Activated CD4-positive, alpha-beta memory T cell treated with anti-CD3 and anti-CD28 coated beads for 36 hours (primary cell): ENCODE measurements at regions of chr13 and their contacts with region 1.

Region 1: GRCh38 chr13:39616087-39616694 is 13.2 kb upstream of the LHFPL6 start:
- DNase-seq: peak; percentile 39
- H3K4me3 Mint-ChIP-seq: no peak overlapping the region
- H3K27ac Mint-ChIP-seq: no peak overlapping the region
- H3K4me1 Mint-ChIP-seq: no peaks in the 10 kb centered on the region
- H3K27me3 Mint-ChIP-seq: peaks cover 5% of the 10 kb centered on the region

Region 2: DNA sequence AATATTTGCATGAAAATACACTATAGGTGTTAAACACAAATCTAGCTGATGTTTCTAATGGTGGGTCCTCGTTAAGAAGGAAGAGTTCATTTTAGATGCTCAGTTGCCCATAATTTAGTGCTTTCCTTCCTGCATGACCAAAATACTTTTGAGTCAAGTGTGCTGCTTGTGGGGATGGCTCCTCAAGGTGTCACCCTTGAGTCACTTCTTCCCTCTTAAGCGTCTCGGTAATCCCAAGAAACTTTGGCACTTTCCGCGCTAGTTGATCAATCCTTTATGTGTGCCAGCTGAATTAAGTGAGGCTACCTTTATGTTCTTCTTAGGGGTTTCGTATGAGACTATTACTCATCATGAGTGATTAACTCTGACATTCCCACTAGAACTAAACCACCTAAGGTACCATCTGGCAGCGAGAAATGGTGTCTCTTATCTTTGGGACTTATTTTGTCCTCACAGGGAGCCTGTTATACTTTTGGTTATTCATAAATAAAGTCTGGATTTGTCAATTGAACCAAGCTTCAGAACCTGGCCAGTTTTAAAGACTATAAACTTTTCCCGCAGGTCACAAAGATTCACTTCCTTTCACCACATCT is 471.2 kb before region 1 on chr13:
- CTCF ChIA-PET with region 1: interaction called, 31 read pairs
- POLR2A ChIA-PET with region 1: no interaction called
- intact Hi-C with region 1: loop called (anchors 2 kb)
- DNase-seq: peak; percentile 59
- H3K4me3 Mint-ChIP-seq: no peak overlapping the region
- H3K27ac Mint-ChIP-seq: no peak overlapping the region
- H3K4me1 Mint-ChIP-seq: peaks cover 43% of the 10 kb centered on the region
- H3K27me3 Mint-ChIP-seq: peaks cover 19% of the 10 kb centered on the region

Region 3: GRCh38 chr13:39232401-39232980 is 383.7 kb before region 1 on chr13:
- CTCF ChIA-PET with region 1: no interaction called
- POLR2A ChIA-PET with region 1: no interaction called
- intact Hi-C with region 1: no loop called
- DNase-seq: no peak
- H3K4me3 Mint-ChIP-seq: no peak overlapping the region
- H3K27ac Mint-ChIP-seq: no peak overlapping the region
- H3K4me1 Mint-ChIP-seq: no peaks in the 10 kb centered on the region
- H3K27me3 Mint-ChIP-seq: peaks cover 13% of the 10 kb centered on the region

Region 4: DNA sequence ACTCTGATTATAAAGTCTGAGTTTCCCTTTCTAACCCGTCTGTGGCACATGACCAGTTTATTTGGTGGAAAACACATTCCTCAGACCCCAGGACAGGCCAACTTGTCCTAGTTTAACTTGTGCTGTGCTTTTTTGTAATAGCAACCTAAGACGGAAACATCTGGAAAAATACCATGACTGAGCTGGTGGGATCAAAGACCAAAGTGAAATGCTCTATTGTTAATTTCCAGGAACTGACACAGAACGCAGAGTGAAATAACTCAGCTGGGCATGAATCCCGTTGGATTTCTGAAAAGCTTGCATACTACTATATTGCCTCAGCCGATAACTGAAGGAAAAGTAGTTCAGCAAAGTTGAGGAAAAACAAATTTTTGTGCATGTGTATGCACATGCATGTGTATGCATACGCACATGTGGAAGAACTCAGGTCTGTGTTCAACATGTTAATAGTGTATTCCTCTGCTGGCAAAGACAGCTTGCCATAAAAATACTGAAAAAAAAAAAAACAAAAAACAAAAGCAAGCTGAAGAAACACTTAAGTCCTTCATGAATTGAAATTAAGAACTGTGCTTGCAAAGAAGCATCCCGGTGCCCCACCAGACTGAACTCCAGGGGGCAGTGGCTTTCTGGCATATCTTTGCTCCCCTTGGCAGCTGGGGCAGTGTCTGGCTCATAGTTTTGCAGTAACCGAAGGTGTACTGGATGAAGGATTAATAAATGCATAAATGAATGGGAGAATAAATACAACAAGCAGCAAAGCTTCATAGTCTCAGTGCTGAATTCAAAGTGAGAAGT is 201.0 kb before region 1 on chr13:
- CTCF ChIA-PET with region 1: interaction called, 7 read pairs
- POLR2A ChIA-PET with region 1: no interaction called
- intact Hi-C with region 1: loop called (anchors 5 kb)
- DNase-seq: peak; percentile 18
- H3K4me3 Mint-ChIP-seq: no peak overlapping the region
- H3K27ac Mint-ChIP-seq: no peak overlapping the region
- H3K4me1 Mint-ChIP-seq: no peaks in the 10 kb centered on the region
- H3K27me3 Mint-ChIP-seq: peaks cover 13% of the 10 kb centered on the region

Region 5: GRCh38 chr13:39646122-39646521 is 29.9 kb after region 1 on chr13:
- CTCF ChIA-PET with region 1: interaction called, 10 read pairs
- POLR2A ChIA-PET with region 1: no interaction called
- intact Hi-C with region 1: no loop called
- DNase-seq: no peak
- H3K4me3 Mint-ChIP-seq: no peak overlapping the region
- H3K27ac Mint-ChIP-seq: no peak overlapping the region
- H3K4me1 Mint-ChIP-seq: no peaks in the 10 kb centered on the region
- H3K27me3 Mint-ChIP-seq: peaks cover 4% of the 10 kb centered on the region

Region 6: DNA sequence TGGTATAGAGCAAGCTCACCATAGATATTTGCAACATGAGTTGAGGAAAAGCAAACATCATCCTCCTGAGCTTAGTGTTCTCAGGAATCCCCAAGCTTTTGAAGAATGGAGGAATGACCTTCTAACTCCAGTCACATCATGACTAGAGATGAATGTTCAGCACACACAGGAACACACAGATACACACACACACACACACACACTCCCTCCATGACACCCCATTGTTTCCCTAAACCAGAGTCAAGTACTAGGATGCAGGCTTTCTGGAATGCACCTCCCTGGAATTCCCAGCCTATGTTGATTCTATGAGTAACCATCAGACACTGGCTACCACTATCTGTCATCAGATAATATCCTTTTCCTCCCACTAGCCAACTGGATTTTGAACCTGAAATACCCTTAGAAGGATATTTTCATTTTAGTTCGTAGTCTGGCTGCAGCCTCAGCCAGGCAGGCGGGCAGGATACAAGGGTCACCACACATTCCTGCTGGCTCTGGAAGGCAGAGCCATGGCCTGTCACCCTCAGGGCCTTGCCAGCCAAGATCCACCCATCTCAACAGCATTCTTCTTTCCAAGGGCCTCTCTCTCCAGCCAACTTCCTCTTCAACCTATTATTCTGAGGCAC is 887.9 kb after region 1 on chr13:
- CTCF ChIA-PET with region 1: no interaction called
- POLR2A ChIA-PET with region 1: no interaction called
- intact Hi-C with region 1: no loop called
- DNase-seq: no peak
- H3K4me3 Mint-ChIP-seq: no peak overlapping the region
- H3K27ac Mint-ChIP-seq: no peak overlapping the region
- H3K4me1 Mint-ChIP-seq: peaks cover 25% of the 10 kb centered on the region
- H3K27me3 Mint-ChIP-seq: no peaks in the 10 kb centered on the region